ENCODE measurements at regions of chr19 and their contacts with region 1.

Region 1: GRCh38 chr19:34639491-34640085 is 37.4 kb downstream of the SCGB2B2 start:
- DNase-seq: peak; percentile 43
- H3K4me3 ChIP-seq: no peak overlapping the region; a peak in 1 of 4 replicates
- H3K27ac ChIP-seq: no peak overlapping the region
- H3K4me1 ChIP-seq: no peaks in the 10 kb centered on the region; a peak in 1 of 4 replicates
- H3K27me3 ChIP-seq: no peaks in the 10 kb centered on the region
- CTCF ChIP-seq: peak; percentile 80
- EP300 ChIP-seq: no peak
- RAD21 ChIP-seq: peak; percentile 91

Region 2: DNA sequence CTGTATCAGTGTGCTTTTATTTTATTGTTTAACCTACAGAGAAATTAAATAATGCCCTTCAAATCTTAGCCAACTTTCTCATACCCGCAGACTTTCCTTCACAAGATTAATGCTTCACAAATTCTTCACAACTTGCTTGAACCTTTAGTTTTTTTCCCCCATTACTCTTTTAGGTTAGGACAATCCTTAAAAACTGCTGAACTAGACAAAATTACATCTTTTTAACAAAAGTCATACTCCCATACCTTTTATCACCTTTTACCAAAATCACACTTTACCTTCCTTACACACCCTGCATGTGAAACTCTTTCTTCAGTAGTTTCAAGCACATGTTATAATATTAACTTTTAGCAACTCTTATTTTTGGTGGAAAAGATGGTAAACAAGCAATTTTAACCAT is 21.2 kb before region 1 on chr19:
- CTCF ChIA-PET with region 1: interaction called, 11 read pairs
- POLR2A ChIA-PET with region 1: no interaction called
- DNase-seq: no peak
- H3K4me3 ChIP-seq: no peak overlapping the region
- H3K27ac ChIP-seq: no peak overlapping the region
- H3K4me1 ChIP-seq: no peaks in the 10 kb centered on the region
- H3K27me3 ChIP-seq: no peaks in the 10 kb centered on the region
- CTCF ChIP-seq: no peak
- EP300 ChIP-seq: no peak
- RAD21 ChIP-seq: no peak

Region 3: DNA sequence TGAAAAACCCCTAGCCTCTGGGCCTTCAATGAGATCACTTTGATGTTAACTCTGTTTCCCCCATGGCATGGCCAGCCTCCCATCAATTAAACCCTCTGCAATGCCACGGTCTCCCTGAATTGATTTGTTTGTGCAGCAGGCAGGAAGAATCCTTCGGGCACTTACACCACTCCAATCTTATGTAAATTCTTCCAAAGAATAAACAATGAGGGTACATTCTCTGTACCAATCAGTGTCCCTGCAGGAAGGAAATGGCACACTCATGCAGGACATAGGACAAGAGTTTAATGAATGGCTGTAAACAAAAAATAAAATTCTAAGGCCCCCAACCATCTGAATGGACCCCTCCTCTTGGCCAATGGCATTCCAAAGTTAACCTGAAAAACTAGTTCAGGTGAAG is 15.2 kb after region 1 on chr19:
- CTCF ChIA-PET with region 1: interaction called, 10 read pairs
- POLR2A ChIA-PET with region 1: no interaction called
- DNase-seq: no peak
- H3K4me3 ChIP-seq: no peak overlapping the region
- H3K27ac ChIP-seq: no peak overlapping the region
- H3K4me1 ChIP-seq: no peaks in the 10 kb centered on the region
- H3K27me3 ChIP-seq: no peaks in the 10 kb centered on the region
- CTCF ChIP-seq: no peak
- EP300 ChIP-seq: no peak
- RAD21 ChIP-seq: no peak

Region 4: DNA sequence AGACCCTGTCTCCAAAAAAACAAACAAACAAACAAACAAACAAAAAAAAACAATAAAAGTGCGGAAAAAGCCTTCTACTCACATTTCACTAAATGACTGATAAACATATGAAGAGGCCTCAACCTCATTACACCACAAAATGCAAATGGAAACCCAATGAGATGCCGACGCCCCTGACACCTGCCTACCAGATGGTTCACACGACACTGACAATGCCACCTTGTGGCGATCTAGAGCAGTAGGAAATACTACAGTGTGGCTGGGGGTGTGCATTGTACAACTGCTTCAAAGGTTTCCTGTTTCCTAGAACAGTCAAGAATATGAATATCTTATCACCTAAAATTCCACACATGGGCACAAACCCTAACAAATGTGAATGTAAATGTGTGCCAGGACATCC is 23.3 kb after region 1 on chr19:
- CTCF ChIA-PET with region 1: interaction called, 71 read pairs
- POLR2A ChIA-PET with region 1: no interaction called
- DNase-seq: peak; percentile 68
- H3K4me3 ChIP-seq: no peak overlapping the region
- H3K27ac ChIP-seq: no peak overlapping the region
- H3K4me1 ChIP-seq: peaks cover 0 to 15% of the 10 kb centered on the region in 2 experiments; a peak in 1 of 4 replicates
- H3K27me3 ChIP-seq: no peaks in the 10 kb centered on the region
- CTCF ChIP-seq: peak; percentile 41
- EP300 ChIP-seq: no peak
- RAD21 ChIP-seq: peak; percentile 57

Region 5: DNA sequence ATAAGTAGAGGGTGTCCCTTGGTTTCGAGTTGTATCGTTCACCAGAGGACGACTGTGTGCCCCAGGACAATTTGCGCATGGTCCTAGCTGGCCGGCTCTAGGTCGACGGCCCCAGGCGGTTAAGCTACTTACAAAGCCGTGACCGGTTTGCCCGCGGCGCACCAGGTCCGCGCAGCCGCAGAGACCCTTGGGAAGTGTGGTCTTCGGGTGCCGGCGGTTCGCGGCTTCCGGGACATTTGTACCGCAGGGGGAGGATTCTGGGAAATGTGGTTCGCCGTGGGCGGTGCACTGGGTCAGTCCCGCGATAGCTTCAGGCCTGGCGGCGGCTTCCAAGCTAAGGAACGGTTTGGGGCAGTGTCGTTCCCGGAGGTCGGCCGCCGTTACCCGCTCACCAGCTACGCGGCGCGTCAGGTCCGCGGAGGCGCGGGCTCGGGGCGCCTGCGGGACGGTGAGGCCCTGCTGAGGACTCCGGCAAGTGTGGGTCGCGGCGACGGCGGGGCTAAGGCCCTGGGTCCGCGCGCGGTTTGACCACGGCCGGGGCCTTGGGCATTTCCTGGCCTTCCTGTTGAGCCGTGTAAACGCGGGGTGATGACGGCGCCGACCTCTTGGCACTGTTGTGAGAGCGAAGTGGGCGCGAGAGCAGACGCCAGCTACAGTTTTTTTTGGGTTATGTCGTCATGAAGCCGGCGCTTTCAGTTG is 37.9 kb after region 1 on chr19 and contains the start of gene ZNF302:
- CTCF ChIA-PET with region 1: interaction called, 11 read pairs
- POLR2A ChIA-PET with region 1: interaction called, 22 read pairs
- DNase-seq: peak; percentile 94
- H3K4me3 ChIP-seq: peak within 1 kb of the TSS; percentile 75 to 79
- H3K27ac ChIP-seq: peak within 1 kb of the TSS; percentile 80 to 99
- H3K4me1 ChIP-seq: peaks cover 0 to 7% of the 10 kb centered on the region in 2 experiments; a peak in 2 of 4 replicates
- H3K27me3 ChIP-seq: no peaks in the 10 kb centered on the region
- CTCF ChIP-seq: no peak
- EP300 ChIP-seq: peak in 1 of 2 experiments; percentile 5; a peak in 1 of 4 replicates
- RAD21 ChIP-seq: no peak
- polyA plus RNA-seq, gene ZNF302: 14.3 and 17.9 TPM in 2 replicates

Region 6: DNA sequence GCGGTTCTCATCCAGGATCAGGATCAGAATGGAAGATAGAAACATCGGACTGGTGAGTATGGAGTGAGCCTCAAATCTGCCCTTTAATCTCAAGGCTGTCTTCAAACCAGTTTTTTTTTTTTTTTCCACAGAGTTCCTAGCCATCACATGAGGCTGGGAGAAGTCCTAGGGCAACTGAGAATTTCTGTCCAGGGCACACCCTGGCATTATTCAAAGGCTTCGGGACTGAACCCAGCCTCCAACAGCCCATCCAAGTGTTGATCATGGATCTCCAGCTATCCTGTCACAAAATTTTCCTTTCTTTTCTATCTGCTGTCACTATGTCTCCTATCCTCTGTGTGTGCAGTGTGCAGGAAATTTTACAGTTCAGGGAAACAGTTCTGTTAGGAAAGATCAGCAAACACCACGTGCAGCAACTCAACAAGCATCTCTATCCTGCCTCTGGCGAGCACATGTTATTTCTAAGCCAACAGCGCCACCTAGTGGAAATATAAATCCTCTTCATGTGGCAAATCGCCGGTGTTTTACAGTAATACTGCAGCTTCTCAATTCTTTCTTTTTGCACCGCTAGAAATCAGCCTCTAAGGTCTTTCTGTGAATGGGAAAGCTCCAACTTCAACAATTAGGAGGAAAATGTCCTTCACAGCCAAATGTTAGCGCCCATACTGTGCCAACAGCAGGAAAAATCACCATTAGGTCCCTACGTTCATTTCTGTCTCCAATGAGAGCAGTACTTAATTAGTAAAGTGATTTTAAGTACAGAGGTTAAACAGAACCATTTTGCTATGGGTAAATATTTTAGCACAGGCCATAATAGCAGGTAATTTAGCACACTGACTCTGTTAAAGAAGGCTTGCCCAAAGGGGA is 73.0 kb after region 1 on chr19:
- CTCF ChIA-PET with region 1: interaction called, 73 read pairs
- POLR2A ChIA-PET with region 1: no interaction called
- DNase-seq: peak; percentile 55
- H3K4me3 ChIP-seq: peak overlapping the region in 1 of 2 experiments; percentile 21; a peak in 2 of 4 replicates
- H3K27ac ChIP-seq: no peak overlapping the region
- H3K4me1 ChIP-seq: no peaks in the 10 kb centered on the region
- H3K27me3 ChIP-seq: no peaks in the 10 kb centered on the region
- CTCF ChIP-seq: peak; percentile 71
- EP300 ChIP-seq: no peak
- RAD21 ChIP-seq: peak; percentile 87